ENCODE measurements at regions of chr6 and their contacts with region 1.

Region 1: GRCh38 chr6:118776607-118777549 is 117.1 kb upstream of the ASF1A start:
- DNase-seq: peak; percentile 32 to 82 (median 61)
- ATAC-seq: peak; percentile 89
- H3K4me3 ChIP-seq: no peak overlapping the region
- H3K4me3 Mint-ChIP-seq: no peak overlapping the region
- H3K27ac ChIP-seq: no peak overlapping the region
- H3K27ac Mint-ChIP-seq: peak overlapping the region; percentile 38
- H3K4me1 ChIP-seq: peaks cover 20% of the 10 kb centered on the region
- H3K4me1 Mint-ChIP-seq: peaks cover 28% of the 10 kb centered on the region
- H3K27me3 ChIP-seq: no peaks in the 10 kb centered on the region
- H3K27me3 Mint-ChIP-seq: no peaks in the 10 kb centered on the region
- CTCF ChIP-seq: peak; percentile 82

Region 2: DNA sequence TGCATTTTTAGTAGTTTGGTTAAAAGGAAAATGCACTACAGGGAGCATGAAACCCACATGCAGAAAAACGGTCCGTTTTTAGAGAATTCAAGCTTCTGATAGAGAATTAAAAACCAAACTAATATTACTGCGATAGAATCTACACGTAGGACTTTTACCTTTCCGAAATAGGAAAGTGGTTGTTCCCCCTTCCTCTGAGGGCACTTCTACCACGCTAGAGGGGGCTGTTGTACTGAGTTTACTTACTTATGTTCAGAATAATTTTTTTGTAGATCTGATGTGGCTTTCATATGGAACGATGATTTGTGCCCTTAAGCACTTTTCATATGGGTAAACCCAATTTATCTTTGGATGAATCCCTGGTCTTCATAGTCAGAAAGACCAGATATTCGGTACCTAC is 493.1 kb before region 1 on chr6:
- CTCF ChIA-PET with region 1: no interaction called
- POLR2A ChIA-PET with region 1: no interaction called
- intact Hi-C with region 1: loop called (anchors 1 kb)
- DNase-seq: peak in 8 of 9 experiments; percentile 14 to 74 (median 52)
- ATAC-seq: peak; percentile 61
- H3K4me3 ChIP-seq: no peak overlapping the region
- H3K4me3 Mint-ChIP-seq: no peak overlapping the region
- H3K27ac ChIP-seq: no peak overlapping the region
- H3K27ac Mint-ChIP-seq: no peak overlapping the region
- H3K4me1 ChIP-seq: no peaks in the 10 kb centered on the region
- H3K4me1 Mint-ChIP-seq: peaks cover 2% of the 10 kb centered on the region
- H3K27me3 ChIP-seq: no peaks in the 10 kb centered on the region
- H3K27me3 Mint-ChIP-seq: peaks cover 11% of the 10 kb centered on the region
- CTCF ChIP-seq: peak; percentile 61

Region 3: DNA sequence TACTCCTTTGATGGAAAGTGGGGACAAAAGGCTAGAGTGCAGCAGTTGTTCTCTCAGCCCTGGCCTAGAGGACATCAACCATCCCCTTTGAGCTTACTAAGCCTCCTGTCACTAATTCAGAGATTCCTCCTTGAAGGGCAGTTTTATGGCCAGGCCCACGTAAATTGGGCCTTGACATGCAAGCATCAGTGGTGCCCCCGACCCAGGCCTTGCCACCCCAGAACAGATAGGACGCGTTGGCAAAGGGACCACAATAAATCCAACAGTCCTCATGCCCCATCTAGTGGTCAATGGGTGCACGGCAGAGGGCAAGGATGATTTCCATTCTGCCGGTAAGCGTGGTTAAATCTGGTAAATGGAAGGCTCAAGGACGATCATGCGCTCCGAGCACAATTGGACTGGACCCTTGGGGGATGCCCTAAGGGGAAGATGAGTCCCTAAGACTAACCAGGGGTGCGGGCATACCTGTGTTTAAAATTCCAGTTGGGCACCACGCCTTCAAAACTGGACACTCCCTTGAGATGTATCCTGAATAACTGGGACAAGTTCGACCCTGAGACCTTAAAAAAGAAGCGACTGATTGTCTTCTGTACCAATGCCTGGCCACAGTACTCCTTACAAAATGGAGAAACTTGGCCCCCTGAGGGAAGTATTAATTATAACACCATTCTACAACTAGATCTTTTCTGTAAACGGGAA is 158.1 kb before region 1 on chr6:
- CTCF ChIA-PET with region 1: no interaction called
- POLR2A ChIA-PET with region 1: no interaction called
- intact Hi-C with region 1: loop called in 1 of 2 experiments (anchors 2 kb)
- DNase-seq: peak; percentile 38 to 81 (median 66)
- ATAC-seq: peak; percentile 96
- H3K4me3 ChIP-seq: no peak overlapping the region
- H3K4me3 Mint-ChIP-seq: no peak overlapping the region
- H3K27ac ChIP-seq: no peak overlapping the region
- H3K27ac Mint-ChIP-seq: peak overlapping the region; percentile 83
- H3K4me1 ChIP-seq: peaks cover 7% of the 10 kb centered on the region
- H3K4me1 Mint-ChIP-seq: peaks cover 64% of the 10 kb centered on the region
- H3K27me3 ChIP-seq: no peaks in the 10 kb centered on the region
- H3K27me3 Mint-ChIP-seq: no peaks in the 10 kb centered on the region
- CTCF ChIP-seq: peak; percentile 79

Region 4: GRCh38 chr6:118651282-118652050 is 125.4 kb before region 1 on chr6 and contains the start of gene CEP85L:
- CTCF ChIA-PET with region 1: no interaction called
- POLR2A ChIA-PET with region 1: interaction called, 3 read pairs
- intact Hi-C with region 1: loop called (anchors 2 to 5 kb)
- DNase-seq: peak; percentile 80 to 95 (median 91)
- ATAC-seq: peak; percentile 91
- H3K4me3 ChIP-seq: peak within 1 kb of the TSS; percentile 72 to 86
- H3K4me3 Mint-ChIP-seq: peak within 1 kb of the TSS; percentile 95
- H3K27ac ChIP-seq: peak within 1 kb of the TSS; percentile 79 to 81
- H3K27ac Mint-ChIP-seq: peak within 1 kb of the TSS; percentile 95
- H3K4me1 ChIP-seq: peaks cover 43% of the 10 kb centered on the region
- H3K4me1 Mint-ChIP-seq: peaks cover 51% of the 10 kb centered on the region
- H3K27me3 ChIP-seq: no peaks in the 10 kb centered on the region
- H3K27me3 Mint-ChIP-seq: no peaks in the 10 kb centered on the region
- CTCF ChIP-seq: no peak
- total RNA-seq, gene CEP85L: 86.2 to 89.0 TPM

Region 5: DNA sequence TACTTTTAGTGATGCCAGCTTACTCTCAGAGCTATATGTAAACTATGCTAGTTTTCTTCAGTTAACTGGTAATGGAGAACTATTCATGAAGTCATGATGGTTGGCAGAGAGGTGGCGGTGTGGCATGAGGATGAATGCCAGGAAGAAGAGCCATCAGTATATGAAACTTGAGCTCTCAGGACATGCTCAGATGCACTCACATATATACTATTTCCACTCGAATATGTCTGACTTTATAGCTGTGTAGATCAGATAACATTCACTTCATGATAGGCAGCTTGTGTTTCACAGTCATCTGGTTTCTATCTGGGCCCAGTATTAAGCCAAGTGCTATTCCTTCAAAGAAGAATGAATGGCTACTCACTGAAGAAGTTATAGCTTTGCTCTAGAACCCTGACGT is 79.3 kb before region 1 on chr6:
- CTCF ChIA-PET with region 1: interaction called, 4 read pairs
- POLR2A ChIA-PET with region 1: no interaction called
- intact Hi-C with region 1: loop called in 1 of 2 experiments (anchors 5 kb)
- DNase-seq: peak in 2 of 9 experiments; percentile 31 to 51
- ATAC-seq: peak; percentile 51
- H3K4me3 ChIP-seq: no peak overlapping the region
- H3K4me3 Mint-ChIP-seq: no peak overlapping the region
- H3K27ac ChIP-seq: no peak overlapping the region
- H3K27ac Mint-ChIP-seq: peak overlapping the region; percentile 1
- H3K4me1 ChIP-seq: peaks cover 44% of the 10 kb centered on the region
- H3K4me1 Mint-ChIP-seq: peaks cover 85% of the 10 kb centered on the region
- H3K27me3 ChIP-seq: no peaks in the 10 kb centered on the region
- H3K27me3 Mint-ChIP-seq: no peaks in the 10 kb centered on the region
- CTCF ChIP-seq: no peak

Region 6: DNA sequence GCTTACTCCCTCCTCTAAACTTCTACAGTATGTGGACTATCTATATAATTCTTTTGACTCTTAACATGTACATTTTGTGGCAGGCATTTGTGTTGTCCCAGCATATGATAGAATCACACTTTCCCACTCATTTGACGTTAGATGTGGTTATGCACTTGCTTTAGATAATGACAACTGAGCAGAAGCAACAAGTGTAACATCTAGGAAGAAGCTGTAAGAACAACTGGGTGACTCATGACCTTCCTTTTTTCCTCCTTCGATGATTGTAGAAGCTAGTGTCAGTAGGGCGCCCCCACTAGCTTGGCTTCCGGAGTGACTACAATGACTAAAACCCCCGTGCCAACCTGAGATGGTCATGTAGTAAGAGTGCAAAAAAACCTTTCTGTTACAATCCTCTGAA is 50.9 kb before region 1 on chr6:
- CTCF ChIA-PET with region 1: interaction called, 5 read pairs
- POLR2A ChIA-PET with region 1: interaction called, 4 read pairs
- intact Hi-C with region 1: loop called in 1 of 2 experiments (anchors 2 kb)
- DNase-seq: peak in 8 of 9 experiments; percentile 52 to 88 (median 74)
- ATAC-seq: peak; percentile 92
- H3K4me3 ChIP-seq: no peak overlapping the region
- H3K4me3 Mint-ChIP-seq: peak overlapping the region; percentile 38
- H3K27ac ChIP-seq: peak overlapping the region in 1 of 2 experiments; percentile 36
- H3K27ac Mint-ChIP-seq: peak overlapping the region; percentile 82
- H3K4me1 ChIP-seq: peaks cover 49% of the 10 kb centered on the region
- H3K4me1 Mint-ChIP-seq: peaks cover 67% of the 10 kb centered on the region
- H3K27me3 ChIP-seq: no peaks in the 10 kb centered on the region
- H3K27me3 Mint-ChIP-seq: no peaks in the 10 kb centered on the region
- CTCF ChIP-seq: peak; percentile 33

Region 7: GRCh38 chr6:118787724-118788423 is 11.0 kb after region 1 on chr6:
- CTCF ChIA-PET with region 1: interaction called, 19 read pairs
- POLR2A ChIA-PET with region 1: interaction called, 5 read pairs
- intact Hi-C with region 1: no loop called
- DNase-seq: peak in 2 of 9 experiments; percentile 24 to 37
- ATAC-seq: peak; percentile 85
- H3K4me3 ChIP-seq: no peak overlapping the region
- H3K4me3 Mint-ChIP-seq: no peak overlapping the region
- H3K27ac ChIP-seq: peak overlapping the region in 1 of 2 experiments; percentile 37
- H3K27ac Mint-ChIP-seq: peak overlapping the region; percentile 69
- H3K4me1 ChIP-seq: peaks cover 13% of the 10 kb centered on the region
- H3K4me1 Mint-ChIP-seq: peaks cover 30% of the 10 kb centered on the region
- H3K27me3 ChIP-seq: no peaks in the 10 kb centered on the region
- H3K27me3 Mint-ChIP-seq: no peaks in the 10 kb centered on the region
- CTCF ChIP-seq: no peak